ENCODE measurements at regions of chr16 and their contacts with region 1.

Region 1: DNA sequence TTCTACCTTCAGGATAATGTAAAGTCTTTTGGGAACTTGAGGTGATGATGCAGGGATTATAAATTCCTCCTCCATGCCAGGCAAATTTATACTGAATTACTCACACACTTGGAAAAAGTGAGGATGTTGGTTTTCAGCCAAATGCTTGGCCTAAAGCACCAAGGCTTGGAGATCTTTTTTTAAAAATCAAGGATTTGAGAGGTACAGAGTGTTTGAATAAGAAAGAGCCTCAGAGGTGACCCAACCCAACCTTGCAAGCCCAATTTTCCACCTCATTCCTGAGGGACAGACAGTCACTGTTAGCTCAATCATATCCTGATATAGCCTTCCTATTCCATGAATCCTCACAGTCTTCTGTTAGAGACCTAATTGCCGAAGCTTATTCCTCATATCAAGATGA is 14.0 kb downstream of the GRIN2A start:
- DNase-seq: no peak
- H3K4me3 ChIP-seq: no peak overlapping the region
- H3K27ac ChIP-seq: peak overlapping the region; percentile 60 to 76 (median 72)
- H3K4me1 ChIP-seq: peaks cover 0 to 33% (median 20%) of the 10 kb centered on the region in 4 donors
- H3K27me3 ChIP-seq: no peaks in the 10 kb centered on the region
- CTCF ChIP-seq: no peak
- EP300 ChIP-seq: no peak
- POLR2A ChIP-seq: no peak

Region 2: DNA sequence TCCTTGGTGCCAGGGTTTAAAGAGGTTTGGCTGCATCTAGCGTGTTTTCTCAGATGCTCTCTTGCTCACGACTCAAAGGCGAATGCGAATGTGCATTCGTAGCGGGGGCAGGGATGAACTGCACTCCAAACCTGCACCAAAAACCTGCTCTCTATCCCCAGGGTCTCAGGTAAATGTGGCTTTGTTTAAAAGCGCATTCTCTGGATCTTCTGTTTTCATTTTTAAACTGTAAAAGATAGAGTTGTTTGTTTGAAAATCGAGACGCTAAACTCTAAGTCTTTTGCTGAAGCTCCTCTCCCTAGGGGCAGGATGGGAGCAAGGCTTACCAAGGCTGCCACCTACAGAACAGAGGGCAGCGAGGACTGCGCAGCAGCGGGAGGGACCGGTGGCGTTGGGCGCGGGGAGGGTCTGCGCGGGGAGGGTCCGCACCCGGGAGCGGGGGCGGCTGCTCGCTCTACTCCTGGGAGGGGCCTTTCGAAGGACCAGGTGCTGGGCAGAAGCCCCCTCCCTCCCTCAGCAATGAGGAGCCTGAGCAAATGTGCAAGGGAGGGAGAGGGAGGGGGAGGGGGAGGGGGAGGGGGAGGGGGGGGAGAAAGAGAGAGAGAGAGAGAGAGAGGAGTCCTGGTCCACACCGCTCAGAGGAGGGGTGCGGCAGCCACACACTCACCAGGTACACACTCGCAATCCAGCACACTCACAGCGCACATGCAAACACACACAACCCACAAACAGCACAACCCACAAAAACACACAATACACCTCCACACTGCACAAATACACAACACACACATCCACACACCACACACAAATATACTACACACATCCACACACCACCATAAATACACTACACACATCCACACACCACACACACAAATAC is 128.8 kb before region 1 on chr16:
- intact Hi-C with region 1: no loop called
- DNase-seq: no peak
- H3K4me3 ChIP-seq: peak overlapping the region; percentile 47 to 61 (median 52)
- H3K27ac ChIP-seq: peak overlapping the region in 3 of 4 donors; percentile 13 to 65 (median 36)
- H3K4me1 ChIP-seq: peaks cover 0 to 13% (median 11%) of the 10 kb centered on the region in 4 donors
- H3K27me3 ChIP-seq: no peaks in the 10 kb centered on the region
- CTCF ChIP-seq: peak; percentile 16 to 49 (median 17)
- EP300 ChIP-seq: no peak
- POLR2A ChIP-seq: no peak

Region 3: DNA sequence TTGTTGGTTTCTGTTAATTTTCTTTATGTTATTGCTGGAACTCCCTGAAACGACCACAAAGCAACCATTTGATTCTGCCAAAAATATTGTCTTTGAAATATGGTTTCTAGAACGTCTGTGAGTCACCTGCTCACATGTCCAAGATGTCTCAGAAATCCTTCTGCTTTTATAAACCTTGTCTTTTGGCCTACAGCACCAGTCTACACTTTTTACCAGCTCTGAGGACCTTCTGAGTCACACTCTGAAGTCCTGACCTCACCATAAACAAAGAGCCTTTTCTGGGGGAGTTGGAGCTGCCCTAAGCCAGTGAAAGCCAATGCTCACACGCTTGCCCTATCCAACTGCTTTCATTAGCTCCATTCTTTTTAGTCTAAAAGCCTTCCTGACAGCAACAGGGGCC is 41.6 kb before region 1 on chr16:
- intact Hi-C with region 1: loop called (anchors 5 kb)
- DNase-seq: no peak
- H3K4me3 ChIP-seq: no peak overlapping the region
- H3K27ac ChIP-seq: peak overlapping the region; percentile 49 to 74 (median 70)
- H3K4me1 ChIP-seq: peaks cover 16 to 68% (median 57%) of the 10 kb centered on the region in 4 donors
- H3K27me3 ChIP-seq: no peaks in the 10 kb centered on the region
- CTCF ChIP-seq: no peak
- EP300 ChIP-seq: no peak
- POLR2A ChIP-seq: no peak

Measured in esophagus muscularis mucosa (tissue), 4 donors.